Common myeloid progenitor, CD34-positive (primary cell): ENCODE measurements at regions of chr1 and their contacts with region 1.

Region 1: GRCh38 chr1:225772323-225772768 is 5.3 kb upstream of the SRP9 start:
- DNase-seq: peak; percentile 73 to 79 (median 73)
- H3K4me3 ChIP-seq: no peak overlapping the region
- H3K27ac ChIP-seq: no peak overlapping the region
- H3K4me1 ChIP-seq: peaks cover 4 to 17% (median 9%) of the 10 kb centered on the region in 4 experiments
- H3K27me3 ChIP-seq: no peaks in the 10 kb centered on the region

Region 2: DNA sequence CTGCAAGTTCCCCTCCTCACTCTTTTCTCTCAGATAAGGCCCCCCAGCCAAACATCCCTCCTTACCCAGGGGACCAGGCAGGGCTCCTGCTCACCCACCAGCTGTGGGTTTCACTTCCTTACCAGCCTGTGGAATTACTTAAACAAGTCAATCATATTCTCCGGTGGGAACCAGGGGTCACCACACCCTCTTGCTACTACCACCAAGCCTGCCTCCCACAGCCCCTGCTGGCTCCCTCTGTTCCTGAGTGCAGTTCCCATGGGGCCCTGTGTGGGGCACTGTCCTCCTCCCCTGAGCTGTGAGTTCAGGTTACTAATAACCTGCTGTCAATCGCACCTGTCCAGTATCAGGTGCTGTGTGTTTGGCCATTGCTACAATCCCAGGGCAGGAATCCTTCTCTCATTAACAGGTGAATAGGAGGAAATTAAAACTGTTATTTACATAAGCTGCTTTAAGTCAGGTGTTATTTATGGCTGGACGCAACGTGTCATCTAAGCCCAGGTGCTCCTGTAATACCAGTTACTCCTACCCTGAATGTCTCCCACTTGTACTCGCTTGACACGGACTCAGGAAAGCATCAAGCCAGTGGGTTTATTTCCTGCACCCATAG is 291.4 kb before region 1 on chr1:
- CTCF ChIA-PET with region 1: interaction called, 43 read pairs
- POLR2A ChIA-PET with region 1: no interaction called
- DNase-seq: peak; percentile 31 to 66 (median 59)
- H3K4me3 ChIP-seq: no peak overlapping the region
- H3K27ac ChIP-seq: no peak overlapping the region
- H3K4me1 ChIP-seq: peaks cover 0 to 11% (median 8%) of the 10 kb centered on the region in 4 experiments
- H3K27me3 ChIP-seq: no peaks in the 10 kb centered on the region

Region 3: DNA sequence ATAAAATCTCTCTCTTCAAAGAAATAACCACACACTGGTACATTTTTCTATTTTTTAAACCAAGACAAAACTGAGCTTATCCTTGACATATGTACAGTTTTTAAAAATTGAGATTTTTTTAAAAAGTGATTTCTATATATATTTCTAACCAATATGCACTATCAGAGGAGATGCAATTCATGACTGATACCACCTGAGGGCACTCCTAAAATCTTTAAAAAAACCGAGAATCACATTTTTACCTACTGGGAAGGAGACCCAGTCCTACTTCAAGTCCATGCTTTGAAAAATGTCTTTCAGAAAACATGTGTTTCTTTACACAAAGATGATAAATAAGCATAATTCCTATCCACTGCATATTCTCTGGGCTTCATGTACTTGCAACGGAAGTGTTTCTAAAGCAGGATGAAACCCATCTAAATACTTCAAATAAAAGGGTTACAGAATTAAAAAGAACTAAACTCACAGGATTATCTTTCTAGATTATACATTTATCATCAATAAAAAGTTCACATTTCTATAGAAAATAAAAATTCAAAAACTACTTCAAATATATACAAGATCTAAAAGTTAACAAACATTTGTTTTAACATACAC is 218.0 kb before region 1 on chr1:
- CTCF ChIA-PET with region 1: interaction called, 14 read pairs
- POLR2A ChIA-PET with region 1: no interaction called
- DNase-seq: peak; percentile 22 to 46 (median 39)
- H3K4me3 ChIP-seq: no peak overlapping the region
- H3K27ac ChIP-seq: no peak overlapping the region
- H3K4me1 ChIP-seq: no peaks in the 10 kb centered on the region
- H3K27me3 ChIP-seq: no peaks in the 10 kb centered on the region

Region 4: GRCh38 chr1:225834417-225835329 is 62.3 kb after region 1 on chr1:
- CTCF ChIA-PET with region 1: no interaction called
- POLR2A ChIA-PET with region 1: no interaction called
- DNase-seq: no peak
- H3K4me3 ChIP-seq: no peak overlapping the region
- H3K27ac ChIP-seq: no peak overlapping the region
- H3K4me1 ChIP-seq: no peaks in the 10 kb centered on the region
- H3K27me3 ChIP-seq: no peaks in the 10 kb centered on the region